Activated CD4-positive, alpha-beta T cell treated with anti-CD3 and anti-CD28 coated beads, Interleukin-2, amount 10 ng/mL, durations not matched to agents 7 days and 5 days (primary cell): ENCODE measurements at regions of chr6 and their contacts with region 1.

Region 1: GRCh38 chr6:32952817-32953739 is at the start of gene HLA-DMA:
- DNase-seq: peak; percentile 85
- H3K4me3 Mint-ChIP-seq: peak within 1 kb of the TSS; percentile 72
- H3K27ac Mint-ChIP-seq: peak within 1 kb of the TSS; percentile 82
- H3K4me1 Mint-ChIP-seq: peaks cover 54% of the 10 kb centered on the region
- H3K27me3 Mint-ChIP-seq: no peaks in the 10 kb centered on the region
- total RNA-seq, gene HLA-DMA: 24.0 to 26.8 TPM

Region 2: GRCh38 chr6:32803416-32803815 is 149.7 kb before region 1 on chr6:
- CTCF ChIA-PET with region 1: no interaction called
- POLR2A ChIA-PET with region 1: no interaction called
- DNase-seq: no peak
- H3K4me3 Mint-ChIP-seq: no peak overlapping the region
- H3K27ac Mint-ChIP-seq: no peak overlapping the region
- H3K4me1 Mint-ChIP-seq: peaks cover 3% of the 10 kb centered on the region
- H3K27me3 Mint-ChIP-seq: peaks cover 62% of the 10 kb centered on the region

Region 3: GRCh38 chr6:32933636-32934085 is 19.4 kb before region 1 on chr6:
- CTCF ChIA-PET with region 1: interaction called, 71 read pairs
- POLR2A ChIA-PET with region 1: no interaction called
- DNase-seq: peak; percentile 81
- H3K4me3 Mint-ChIP-seq: no peak overlapping the region
- H3K27ac Mint-ChIP-seq: no peak overlapping the region
- H3K4me1 Mint-ChIP-seq: peaks cover 15% of the 10 kb centered on the region
- H3K27me3 Mint-ChIP-seq: peaks cover 18% of the 10 kb centered on the region

Region 4: DNA sequence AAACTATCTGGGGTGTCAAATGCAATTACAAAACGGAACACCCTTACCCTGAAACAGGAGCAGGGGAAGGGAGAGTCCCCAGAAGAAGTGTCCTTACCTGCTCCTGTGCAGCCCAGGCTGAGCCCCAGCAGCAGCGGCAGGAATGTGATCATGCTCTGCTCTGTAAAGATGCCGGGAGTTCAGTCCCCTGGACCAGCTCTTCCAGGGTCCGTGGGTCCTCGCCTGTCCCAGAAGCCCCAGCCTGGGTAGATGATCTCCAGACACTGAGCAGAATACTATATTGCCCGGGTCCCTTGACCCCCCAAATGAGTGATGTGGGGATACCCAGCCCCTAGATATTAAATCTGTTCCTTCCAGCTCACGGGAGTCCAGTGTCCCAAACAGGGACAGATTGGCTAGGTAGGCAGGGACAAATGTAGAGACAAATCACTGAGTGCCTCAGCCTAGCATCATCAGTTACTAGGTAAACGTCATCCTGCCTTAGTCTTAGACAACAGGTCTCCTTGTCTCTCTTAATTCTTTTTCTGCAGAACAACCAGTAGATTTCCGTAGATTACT is 12.3 kb before region 1 on chr6 and contains the start of gene HLA-DMB:
- CTCF ChIA-PET with region 1: interaction called, 71 read pairs
- POLR2A ChIA-PET with region 1: no interaction called
- DNase-seq: peak; percentile 72
- H3K4me3 Mint-ChIP-seq: peak within 1 kb of the TSS; percentile 77
- H3K27ac Mint-ChIP-seq: peak within 1 kb of the TSS; percentile 97
- H3K4me1 Mint-ChIP-seq: peaks cover 64% of the 10 kb centered on the region
- H3K27me3 Mint-ChIP-seq: no peaks in the 10 kb centered on the region
- total RNA-seq, gene HLA-DMB: 8.1 to 8.5 TPM